Naive thymus-derived CD4-positive, alpha-beta T cell (primary cell): ENCODE measurements at regions of chr6 and their contacts with region 1.

Region 1: GRCh38 chr6:30828027-30828960 is 56.0 kb upstream of the DDR1 start:
- DNase-seq: peak; percentile 66 to 86 (median 79)
- ATAC-seq: peak; percentile 92
- H3K4me3 ChIP-seq: peak overlapping the region; percentile 80
- H3K4me3 Mint-ChIP-seq: peak overlapping the region; percentile 89 to 100 (median 96)
- H3K27ac ChIP-seq: peak overlapping the region; percentile 84
- H3K27ac Mint-ChIP-seq: peak overlapping the region; percentile 82 to 99 (median 96)
- H3K4me1 ChIP-seq: peaks cover 36 to 45% of the 10 kb centered on the region in 2 donors
- H3K4me1 Mint-ChIP-seq: peaks cover 51 to 92% (median 87%) of the 10 kb centered on the region in 7 donors
- H3K27me3 ChIP-seq: no peaks in the 10 kb centered on the region
- H3K27me3 Mint-ChIP-seq: no peaks in the 10 kb centered on the region

Region 2: DNA sequence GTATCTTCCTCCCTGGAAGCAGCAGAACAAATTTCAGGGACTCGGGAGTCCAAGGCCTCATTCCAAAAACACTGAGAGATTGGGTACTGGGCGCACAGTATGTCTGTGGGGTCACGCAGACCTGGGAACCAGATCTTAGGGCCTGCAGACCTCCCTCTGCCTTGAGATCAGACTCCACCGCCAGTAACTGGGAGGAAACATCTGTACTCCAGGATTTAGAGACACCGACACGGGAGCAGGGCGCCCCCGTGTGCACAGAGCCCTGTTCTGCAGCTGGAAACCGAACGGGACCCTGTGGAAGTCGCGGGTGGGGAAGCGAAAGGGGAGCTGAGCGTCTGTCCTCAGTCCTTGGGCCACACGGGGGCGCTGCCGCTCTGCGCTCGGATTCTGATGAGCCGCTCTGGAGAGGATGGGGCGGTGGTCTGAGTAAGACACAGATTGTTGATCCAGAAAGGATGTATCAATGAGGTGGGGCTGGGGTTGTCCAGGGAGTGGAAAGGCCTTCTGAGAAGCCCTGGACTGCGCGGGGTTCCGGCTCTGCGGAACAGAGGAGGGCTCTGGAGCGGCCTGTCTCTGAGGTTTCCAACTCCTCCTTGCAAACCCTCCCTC is 374.7 kb before region 1 on chr6:
- CTCF ChIA-PET with region 1: no interaction called
- POLR2A ChIA-PET with region 1: no interaction called
- intact Hi-C with region 1: no loop called
- DNase-seq: peak; percentile 73 to 90 (median 81)
- ATAC-seq: peak; percentile 86
- H3K4me3 ChIP-seq: peak overlapping the region; percentile 43
- H3K4me3 Mint-ChIP-seq: peak overlapping the region; percentile 49 to 84 (median 73)
- H3K27ac ChIP-seq: no peak overlapping the region
- H3K27ac Mint-ChIP-seq: no peak overlapping the region
- H3K4me1 ChIP-seq: peaks cover 37 to 44% of the 10 kb centered on the region in 2 donors
- H3K4me1 Mint-ChIP-seq: peaks cover 23 to 56% (median 51%) of the 10 kb centered on the region in 7 donors
- H3K27me3 ChIP-seq: peaks cover 22 to 29% of the 10 kb centered on the region in 2 donors
- H3K27me3 Mint-ChIP-seq: peaks cover 67 to 91% (median 82%) of the 10 kb centered on the region in 5 donors

Region 3: DNA sequence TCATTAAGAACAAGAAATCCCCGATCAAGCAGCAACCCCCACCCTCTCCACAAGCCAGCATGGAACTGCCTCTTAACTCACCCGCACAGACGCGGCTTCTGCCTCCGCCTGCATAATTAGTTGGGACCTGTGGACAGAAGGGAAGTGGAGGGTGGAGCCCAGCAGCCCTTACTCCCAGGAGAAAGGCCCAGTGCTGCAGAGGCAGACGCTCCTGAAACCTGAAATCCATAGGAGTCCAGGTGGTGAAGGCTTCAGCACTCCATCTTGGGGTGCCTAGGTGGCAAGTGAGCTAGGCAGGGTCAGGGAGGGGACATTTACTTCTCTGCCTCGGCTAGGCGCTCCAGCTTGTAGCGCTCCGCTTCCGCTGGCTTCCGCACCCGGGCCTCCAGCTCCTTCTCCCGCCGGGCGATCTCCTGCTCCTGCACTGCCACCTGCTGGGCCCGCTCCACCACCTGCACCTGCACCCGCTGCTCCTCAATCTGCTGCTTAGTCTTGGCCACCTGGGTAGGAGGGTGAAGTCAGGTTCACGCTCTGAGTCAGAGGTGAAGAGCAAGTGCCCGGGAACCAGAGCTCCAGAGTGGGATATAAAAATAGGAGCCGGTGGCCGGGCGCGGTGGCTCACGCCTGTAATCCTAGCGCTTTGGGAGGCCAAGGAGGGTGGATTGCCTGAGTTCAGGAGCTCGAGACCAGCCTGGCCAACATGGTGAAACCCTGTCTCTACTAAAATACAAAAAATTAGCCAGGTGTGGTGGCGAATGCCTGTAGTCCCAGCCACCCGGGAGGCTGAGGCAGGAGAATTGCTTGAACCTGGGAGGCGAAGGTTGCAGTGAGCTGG is 97.5 kb before region 1 on chr6:
- CTCF ChIA-PET with region 1: interaction called, 15 read pairs
- POLR2A ChIA-PET with region 1: interaction called, 8 read pairs
- intact Hi-C with region 1: no loop called
- DNase-seq: peak; percentile 62 to 86 (median 81)
- ATAC-seq: peak; percentile 97
- H3K4me3 ChIP-seq: no peak overlapping the region
- H3K4me3 Mint-ChIP-seq: peak overlapping the region in 9 of 10 donors; percentile 27 to 69 (median 55)
- H3K27ac ChIP-seq: peak overlapping the region; percentile 52
- H3K27ac Mint-ChIP-seq: peak overlapping the region in 7 of 9 donors; percentile 29 to 79 (median 73)
- H3K4me1 ChIP-seq: peaks cover 14 to 30% of the 10 kb centered on the region in 2 donors
- H3K4me1 Mint-ChIP-seq: peaks cover 27 to 54% (median 42%) of the 10 kb centered on the region in 7 donors
- H3K27me3 ChIP-seq: no peaks in the 10 kb centered on the region
- H3K27me3 Mint-ChIP-seq: no peaks in the 10 kb centered on the region

Region 4: GRCh38 chr6:30769088-30769852 is 59.0 kb before region 1 on chr6:
- CTCF ChIA-PET with region 1: interaction called, 3 read pairs
- POLR2A ChIA-PET with region 1: interaction called, 4 read pairs
- intact Hi-C with region 1: loop called in 1 of 2 experiments (anchors 2 kb)
- DNase-seq: peak in 8 of 9 donors; percentile 47 to 85 (median 57)
- ATAC-seq: peak; percentile 81
- H3K4me3 ChIP-seq: peak overlapping the region; percentile 15
- H3K4me3 Mint-ChIP-seq: peak overlapping the region; percentile 55 to 84 (median 80)
- H3K27ac ChIP-seq: no peak overlapping the region
- H3K27ac Mint-ChIP-seq: peak overlapping the region; percentile 36 to 95 (median 86)
- H3K4me1 ChIP-seq: peaks cover 24 to 38% of the 10 kb centered on the region in 2 donors
- H3K4me1 Mint-ChIP-seq: peaks cover 38 to 90% (median 77%) of the 10 kb centered on the region in 7 donors
- H3K27me3 ChIP-seq: no peaks in the 10 kb centered on the region
- H3K27me3 Mint-ChIP-seq: no peaks in the 10 kb centered on the region

Region 5: GRCh38 chr6:30877419-30878371 is 49.4 kb after region 1 on chr6:
- CTCF ChIA-PET with region 1: interaction called, 172 read pairs
- POLR2A ChIA-PET with region 1: interaction called, 20 read pairs
- intact Hi-C with region 1: loop called (anchors 1 kb)
- DNase-seq: peak; percentile 52 to 72 (median 63)
- ATAC-seq: peak; percentile 93
- H3K4me3 ChIP-seq: peak overlapping the region; percentile 40
- H3K4me3 Mint-ChIP-seq: peak overlapping the region; percentile 69 to 90 (median 86)
- H3K27ac ChIP-seq: peak overlapping the region; percentile 50
- H3K27ac Mint-ChIP-seq: peak overlapping the region; percentile 44 to 91 (median 84)
- H3K4me1 ChIP-seq: peaks cover 8 to 15% of the 10 kb centered on the region in 2 donors
- H3K4me1 Mint-ChIP-seq: peaks cover 10 to 31% (median 19%) of the 10 kb centered on the region in 7 donors
- H3K27me3 ChIP-seq: no peaks in the 10 kb centered on the region
- H3K27me3 Mint-ChIP-seq: peaks cover 0 to 7% (median 0%) of the 10 kb centered on the region in 5 donors

Region 6: GRCh38 chr6:30907758-30908591 is 79.7 kb after region 1 on chr6 and contains the start of gene GTF2H4:
- CTCF ChIA-PET with region 1: interaction called, 11 read pairs
- POLR2A ChIA-PET with region 1: no interaction called
- intact Hi-C with region 1: loop called in 1 of 2 experiments (anchors 2 kb)
- DNase-seq: peak; percentile 77 to 96 (median 89)
- ATAC-seq: peak; percentile 99
- H3K4me3 ChIP-seq: peak within 1 kb of the TSS; percentile 90
- H3K4me3 Mint-ChIP-seq: peak within 1 kb of the TSS; percentile 95 to 100 (median 99)
- H3K27ac ChIP-seq: peak within 1 kb of the TSS; percentile 78
- H3K27ac Mint-ChIP-seq: peak within 1 kb of the TSS; percentile 72 to 95 (median 82)
- H3K4me1 ChIP-seq: peaks cover 6 to 9% of the 10 kb centered on the region in 2 donors
- H3K4me1 Mint-ChIP-seq: peaks cover 15 to 34% (median 22%) of the 10 kb centered on the region in 7 donors
- H3K27me3 ChIP-seq: no peaks in the 10 kb centered on the region
- H3K27me3 Mint-ChIP-seq: no peaks in the 10 kb centered on the region
- total RNA-seq, gene GTF2H4: 18.8 to 42.3 (median 32.2) TPM

Region 7: DNA sequence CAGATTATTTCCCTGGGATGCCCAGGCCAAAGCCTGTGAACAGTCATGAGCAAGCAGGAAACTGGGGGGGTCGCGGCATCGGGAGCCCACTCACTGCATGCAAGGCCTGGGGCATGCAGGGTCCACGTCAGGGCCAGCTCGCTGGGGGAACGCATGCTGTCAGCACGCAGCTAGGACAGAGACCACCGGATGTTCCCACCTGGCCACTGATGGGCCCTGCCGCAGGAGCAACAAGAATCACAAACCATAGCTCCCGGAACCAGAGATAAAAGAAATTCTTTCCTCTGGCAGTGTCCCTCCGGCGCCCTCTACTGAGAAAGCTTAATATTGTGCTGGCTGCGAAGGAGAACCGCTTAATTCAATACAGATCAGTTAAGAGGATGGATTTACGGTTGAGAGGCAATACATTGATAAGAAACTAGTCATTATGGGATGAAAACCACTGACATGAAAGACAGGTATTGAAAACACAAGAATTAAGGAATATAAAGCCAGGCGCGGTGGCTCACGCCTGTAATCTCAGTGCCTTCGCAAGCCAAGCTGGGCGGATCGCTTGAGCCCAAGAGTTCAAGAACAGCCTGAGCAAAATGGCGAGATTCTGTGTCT is 251.5 kb after region 1 on chr6:
- CTCF ChIA-PET with region 1: interaction called, 11 read pairs
- POLR2A ChIA-PET with region 1: no interaction called
- intact Hi-C with region 1: loop called (anchors 1 to 2 kb)
- DNase-seq: peak; percentile 34 to 77 (median 72)
- ATAC-seq: peak; percentile 93
- H3K4me3 ChIP-seq: peak overlapping the region; percentile 21
- H3K4me3 Mint-ChIP-seq: peak overlapping the region; percentile 37 to 81 (median 66)
- H3K27ac ChIP-seq: no peak overlapping the region
- H3K27ac Mint-ChIP-seq: peak overlapping the region in 4 of 9 donors; percentile 19 to 42 (median 28)
- H3K4me1 ChIP-seq: peaks cover 5 to 6% of the 10 kb centered on the region in 2 donors
- H3K4me1 Mint-ChIP-seq: peaks cover 6 to 9% (median 8%) of the 10 kb centered on the region in 7 donors
- H3K27me3 ChIP-seq: no peaks in the 10 kb centered on the region
- H3K27me3 Mint-ChIP-seq: peaks cover 0 to 26% (median 0%) of the 10 kb centered on the region in 5 donors